Activated CD4-positive, alpha-beta T cell treated with anti-CD3 and anti-CD28 coated beads, Interleukin-2, amount 10 ng/mL, durations not matched to agents 24 days and 14 days (primary cell): ENCODE measurements at regions of chr14 and their contacts with region 1.

Region 1: DNA sequence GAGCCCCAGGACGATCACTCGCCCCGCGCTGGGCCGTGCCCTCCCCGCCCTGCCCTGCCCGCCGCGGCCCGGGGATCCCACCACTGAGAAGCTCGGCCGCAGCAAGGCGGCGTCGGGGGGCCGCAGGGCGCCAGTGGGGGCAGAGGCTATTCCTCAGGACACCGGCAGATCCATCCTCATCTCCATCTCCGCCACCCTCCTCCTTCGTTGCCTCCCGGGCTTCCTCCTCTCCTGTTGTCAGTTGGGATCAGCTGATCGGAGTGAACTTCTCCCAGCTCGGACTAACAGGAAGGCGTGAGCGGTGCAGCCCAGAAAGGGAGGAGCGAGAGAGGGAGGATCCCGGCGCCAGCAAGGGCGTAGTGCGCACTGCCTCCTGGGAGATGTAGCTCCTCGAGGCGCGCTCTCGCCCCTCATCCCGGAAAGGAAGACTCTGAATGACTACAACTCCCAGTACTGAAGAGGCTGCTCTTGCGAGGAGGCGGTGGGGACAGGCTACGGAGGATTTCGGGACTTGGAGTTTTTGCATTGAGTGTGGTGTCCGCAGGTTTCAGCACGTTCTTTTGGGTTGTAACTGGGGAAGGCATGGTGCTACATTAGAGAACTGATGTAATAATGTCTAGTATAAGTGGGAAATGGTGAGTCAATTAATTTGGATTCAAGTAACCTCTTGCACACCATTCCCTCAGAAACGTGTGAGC is at the start of gene ZFYVE1:
- DNase-seq: peak; percentile 97
- H3K4me3 Mint-ChIP-seq: peak within 1 kb of the TSS; percentile 95
- H3K27ac Mint-ChIP-seq: peak within 1 kb of the TSS; percentile 90
- H3K4me1 Mint-ChIP-seq: peaks cover 35% of the 10 kb centered on the region
- H3K27me3 Mint-ChIP-seq: no peaks in the 10 kb centered on the region
- total RNA-seq, gene ZFYVE1: 7.4 and 9.1 TPM in 2 replicates

Region 2: GRCh38 chr14:72926292-72927028 is 100.5 kb before region 1 on chr14 and contains the start of gene DCAF4:
- intact Hi-C with region 1: loop called (anchors 1 kb)
- DNase-seq: peak; percentile 98
- H3K4me3 Mint-ChIP-seq: peak within 1 kb of the TSS; percentile 87
- H3K27ac Mint-ChIP-seq: peak within 1 kb of the TSS; percentile 93
- H3K4me1 Mint-ChIP-seq: peaks cover 11% of the 10 kb centered on the region
- H3K27me3 Mint-ChIP-seq: peaks cover 13% of the 10 kb centered on the region
- total RNA-seq, gene DCAF4: 20.2 and 21.6 TPM in 2 replicates

Region 3: DNA sequence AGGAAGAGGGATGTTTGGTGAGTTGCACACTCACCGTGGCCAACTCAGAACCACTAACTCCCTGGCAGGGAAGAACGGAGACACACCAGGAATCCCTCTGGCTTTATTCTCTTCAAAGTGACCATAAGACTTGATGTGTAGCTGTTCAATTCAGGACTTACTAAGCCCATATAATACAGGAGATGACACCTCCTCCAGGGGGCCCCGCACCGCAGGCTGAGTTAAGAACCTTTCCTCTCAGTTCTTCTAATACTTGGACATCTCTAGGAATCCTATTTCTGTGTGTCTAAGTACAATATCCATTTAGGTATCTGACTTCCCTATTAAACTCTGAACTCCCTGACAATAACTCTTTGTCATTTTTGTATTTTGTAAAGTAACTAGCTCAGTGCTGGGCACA is 51.2 kb before region 1 on chr14:
- intact Hi-C with region 1: no loop called
- DNase-seq: no peak
- H3K4me3 Mint-ChIP-seq: no peak overlapping the region
- H3K27ac Mint-ChIP-seq: no peak overlapping the region
- H3K4me1 Mint-ChIP-seq: no peaks in the 10 kb centered on the region
- H3K27me3 Mint-ChIP-seq: no peaks in the 10 kb centered on the region

Region 4: DNA sequence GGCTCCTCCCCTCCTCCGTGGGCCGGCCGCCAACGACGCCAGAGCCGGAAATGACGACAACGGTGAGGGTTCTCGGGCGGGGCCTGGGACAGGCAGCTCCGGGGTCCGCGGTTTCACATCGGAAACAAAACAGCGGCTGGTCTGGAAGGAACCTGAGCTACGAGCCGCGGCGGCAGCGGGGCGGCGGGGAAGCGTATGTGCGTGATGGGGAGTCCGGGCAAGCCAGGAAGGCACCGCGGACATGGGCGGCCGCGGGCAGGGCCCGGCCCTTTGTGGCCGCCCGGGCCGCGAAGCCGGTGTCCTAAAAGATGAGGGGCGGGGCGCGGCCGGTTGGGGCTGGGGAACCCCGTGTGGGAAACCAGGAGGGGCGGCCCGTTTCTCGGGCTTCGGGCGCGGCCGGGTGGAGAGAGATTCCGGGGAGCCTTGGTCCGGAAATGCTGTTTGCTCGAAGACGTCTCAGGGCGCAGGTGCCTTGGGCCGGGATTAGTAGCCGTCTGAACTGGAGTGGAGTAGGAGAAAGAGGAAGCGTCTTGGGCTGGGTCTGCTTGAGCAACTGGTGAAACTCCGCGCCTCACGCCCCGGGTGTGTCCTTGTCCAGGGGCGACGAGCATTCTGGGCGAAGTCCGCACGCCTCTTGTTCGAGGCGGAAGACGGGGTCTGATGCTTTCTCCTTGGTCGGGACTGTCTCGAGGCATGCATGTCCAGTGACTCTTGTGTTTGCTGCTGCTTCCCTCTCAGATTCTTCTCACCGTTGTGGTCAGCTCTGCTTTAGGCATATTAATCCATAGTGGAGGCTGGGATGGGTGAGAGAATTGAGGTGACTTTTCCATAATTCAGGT is 109.6 kb after region 1 on chr14 and contains the start of gene PSEN1:
- intact Hi-C with region 1: loop called (anchors 5 kb)
- DNase-seq: peak; percentile 100
- H3K4me3 Mint-ChIP-seq: peak within 1 kb of the TSS; percentile 93
- H3K27ac Mint-ChIP-seq: peak within 1 kb of the TSS; percentile 99
- H3K4me1 Mint-ChIP-seq: peaks cover 27% of the 10 kb centered on the region
- H3K27me3 Mint-ChIP-seq: no peaks in the 10 kb centered on the region
- total RNA-seq, gene PSEN1: 34.1 and 39.1 TPM in 2 replicates